ENCODE measurements at regions of chr17 and their contacts with region 1.

Region 1: DNA sequence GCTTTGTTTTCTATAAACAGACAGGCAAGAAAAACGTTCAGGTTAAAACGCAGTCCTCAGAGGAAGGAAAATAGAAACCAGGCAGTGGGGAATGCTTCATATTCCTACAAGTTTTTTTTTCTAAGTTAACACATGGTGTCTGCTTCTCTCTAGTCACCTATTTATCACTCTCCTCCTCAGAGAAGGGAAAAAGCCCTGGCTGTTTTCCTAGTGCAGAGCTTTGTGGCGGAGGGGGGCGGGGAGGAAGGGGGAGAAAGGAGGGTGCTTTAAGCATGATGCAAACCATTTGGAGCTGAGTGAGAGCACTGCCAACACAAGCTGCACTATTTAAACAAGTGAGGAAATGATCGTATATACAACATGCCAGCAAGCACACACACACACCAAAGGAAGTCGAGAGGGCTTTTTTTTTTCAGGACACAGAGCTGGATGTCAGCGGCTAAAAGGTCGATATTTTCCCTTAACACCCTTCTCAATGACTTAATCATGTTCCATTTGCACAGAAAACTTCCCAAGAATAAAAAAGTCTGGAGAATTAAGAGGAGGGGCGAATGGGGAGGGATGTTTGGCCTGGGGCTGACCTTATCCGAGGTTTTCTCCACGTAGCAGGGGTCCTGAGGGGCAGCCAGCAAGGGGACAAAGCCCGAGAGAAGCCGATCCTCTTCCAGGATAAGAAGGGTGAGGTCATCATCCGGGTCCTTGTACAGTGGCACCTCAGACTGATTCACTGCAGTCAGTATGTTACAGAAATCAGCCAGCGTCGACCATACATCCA is 117.4 kb downstream of the HIC1 start:
- DNase-seq: peak; percentile 60
- H3K4me3 ChIP-seq: no peak overlapping the region
- H3K27ac ChIP-seq: peak overlapping the region; percentile 76 to 87 (median 82)
- H3K4me1 ChIP-seq: peaks cover 24 to 47% (median 30%) of the 10 kb centered on the region in 4 donors
- H3K27me3 ChIP-seq: no peaks in the 10 kb centered on the region
- CTCF ChIP-seq: no peak
- EP300 ChIP-seq: peak; percentile 62
- POLR2A ChIP-seq: no peak

Region 2: GRCh38 chr17:2054512-2055291 is 117.6 kb before region 1 on chr17 and contains the start of gene HIC1:
- in situ Hi-C with region 1: loop called in 1 of 4 experiments (anchors 25 kb)
- intact Hi-C with region 1: loop called (anchors 10 kb)
- DNase-seq: peak; percentile 77
- H3K4me3 ChIP-seq: peak within 1 kb of the TSS; percentile 24 to 65 (median 42)
- H3K27ac ChIP-seq: peak within 1 kb of the TSS; percentile 85 to 92 (median 90)
- H3K4me1 ChIP-seq: peaks cover 8 to 75% (median 67%) of the 10 kb centered on the region in 4 donors
- H3K27me3 ChIP-seq: peaks cover 76% of the 10 kb centered on the region
- CTCF ChIP-seq: peak; percentile 60 to 99 (median 93)
- EP300 ChIP-seq: no peak
- POLR2A ChIP-seq: peak; percentile 74
- total RNA-seq, gene HIC1: 9.1 to 32.5 (median 14.7) TPM

Region 3: GRCh38 chr17:2087597-2088211 is 84.6 kb before region 1 on chr17:
- in situ Hi-C with region 1: no loop called
- intact Hi-C with region 1: loop called (anchors 10 kb)
- DNase-seq: peak; percentile 41
- H3K4me3 ChIP-seq: no peak overlapping the region
- H3K27ac ChIP-seq: peak overlapping the region; percentile 85 to 91 (median 90)
- H3K4me1 ChIP-seq: peaks cover 29 to 83% (median 69%) of the 10 kb centered on the region in 4 donors
- H3K27me3 ChIP-seq: no peaks in the 10 kb centered on the region
- CTCF ChIP-seq: no peak
- EP300 ChIP-seq: peak; percentile 38
- POLR2A ChIP-seq: no peak

Region 4: GRCh38 chr17:2215616-2216364 is 43.5 kb after region 1 on chr17:
- in situ Hi-C with region 1: loop called in 1 of 4 experiments (anchors 5 kb)
- intact Hi-C with region 1: loop called (anchors 2 kb)
- DNase-seq: peak; percentile 72
- H3K4me3 ChIP-seq: peak overlapping the region in 1 of 4 donors; percentile 35
- H3K27ac ChIP-seq: peak overlapping the region; percentile 88 to 91 (median 90)
- H3K4me1 ChIP-seq: peaks cover 17 to 48% (median 30%) of the 10 kb centered on the region in 4 donors
- H3K27me3 ChIP-seq: no peaks in the 10 kb centered on the region
- CTCF ChIP-seq: no peak
- EP300 ChIP-seq: no peak
- POLR2A ChIP-seq: peak; percentile 49

Region 5: DNA sequence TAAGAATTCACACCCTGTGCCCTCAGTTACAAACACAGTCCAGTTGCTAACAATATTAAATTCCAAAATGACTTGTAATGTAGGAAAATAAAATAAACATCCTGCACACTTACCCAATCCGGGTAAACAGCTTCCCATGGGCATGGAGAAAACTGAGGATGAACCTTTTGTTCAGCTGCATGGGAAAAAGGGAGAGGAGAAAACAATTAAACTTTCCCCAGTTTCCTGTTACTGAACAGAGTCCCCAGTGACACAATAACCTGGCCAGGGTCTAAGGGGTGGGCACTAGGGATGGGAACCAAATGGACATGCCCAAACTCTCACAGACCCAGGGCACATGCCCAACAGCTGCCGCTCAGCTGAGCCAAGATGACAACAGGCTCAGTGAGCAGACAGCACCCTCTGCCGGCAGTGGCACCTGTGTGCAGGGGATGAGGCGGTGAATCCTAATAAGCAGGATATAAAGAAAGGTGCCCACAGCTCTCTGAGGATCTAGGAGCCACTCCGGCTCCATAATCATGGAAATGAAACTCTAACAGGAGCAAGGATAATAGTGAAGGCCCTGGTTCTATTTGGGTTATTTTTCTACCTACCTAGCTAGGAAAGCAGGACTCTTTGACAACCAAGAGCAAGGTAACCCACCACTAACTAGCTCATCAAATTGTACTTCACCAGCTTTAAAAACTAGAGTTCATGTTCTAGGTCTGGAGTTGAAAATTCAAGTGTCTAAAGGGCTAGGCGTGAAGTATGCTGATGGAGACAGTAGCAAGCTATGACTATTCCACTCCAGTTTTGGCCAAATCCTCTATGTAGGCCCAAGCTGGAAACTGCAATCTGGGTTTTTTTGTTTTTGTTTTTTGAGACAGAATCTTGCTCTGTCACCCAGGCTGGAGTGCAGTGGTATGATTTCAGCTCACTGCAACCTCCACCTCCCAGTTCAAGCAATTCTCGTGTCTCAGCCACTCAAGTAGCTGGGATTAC is 72.6 kb after region 1 on chr17:
- in situ Hi-C with region 1: no loop called
- intact Hi-C with region 1: loop called (anchors 10 kb)
- DNase-seq: peak; percentile 85
- H3K4me3 ChIP-seq: no peak overlapping the region
- H3K27ac ChIP-seq: peak overlapping the region; percentile 52 to 74 (median 72)
- H3K4me1 ChIP-seq: peaks cover 2 to 20% (median 5%) of the 10 kb centered on the region in 4 donors
- H3K27me3 ChIP-seq: no peaks in the 10 kb centered on the region
- CTCF ChIP-seq: peak; percentile 95 to 97 (median 97)
- EP300 ChIP-seq: no peak
- POLR2A ChIP-seq: no peak

Measured in transverse colon (tissue), 4 donors.